ENCODE measurements at regions of chr12 and their contacts with region 1.

Region 1: GRCh38 chr12:124388679-124389536 is 94.0 kb downstream of the RFLNA start:
- DNase-seq: peak; percentile 93
- H3K4me3 ChIP-seq: peak overlapping the region; percentile 61 to 91
- H3K27ac ChIP-seq: peak overlapping the region; percentile 95 to 97
- H3K4me1 ChIP-seq: peaks cover 63 to 64% of the 10 kb centered on the region in 2 experiments
- H3K27me3 ChIP-seq: no peaks in the 10 kb centered on the region
- CTCF ChIP-seq: 0 out of 2 replicates have a peak, but pooled peaks have one; percentile 9
- EP300 ChIP-seq: no peak
- RAD21 ChIP-seq: peak; percentile 9; the same call in 1 of the 2 replicates

Region 2: GRCh38 chr12:124053851-124054250 is 335.1 kb before region 1 on chr12:
- CTCF ChIA-PET with region 1: interaction called, 10 read pairs
- POLR2A ChIA-PET with region 1: no interaction called
- DNase-seq: peak; percentile 44
- H3K4me3 ChIP-seq: no peak overlapping the region; a peak in 1 of 4 replicates
- H3K27ac ChIP-seq: no peak overlapping the region
- H3K4me1 ChIP-seq: peaks cover 0 to 14% of the 10 kb centered on the region in 2 experiments; a peak in 1 of 4 replicates
- H3K27me3 ChIP-seq: no peaks in the 10 kb centered on the region
- CTCF ChIP-seq: peak; percentile 27; the same call in 1 of the 2 replicates
- EP300 ChIP-seq: no peak
- RAD21 ChIP-seq: peak; percentile 70

Region 3: DNA sequence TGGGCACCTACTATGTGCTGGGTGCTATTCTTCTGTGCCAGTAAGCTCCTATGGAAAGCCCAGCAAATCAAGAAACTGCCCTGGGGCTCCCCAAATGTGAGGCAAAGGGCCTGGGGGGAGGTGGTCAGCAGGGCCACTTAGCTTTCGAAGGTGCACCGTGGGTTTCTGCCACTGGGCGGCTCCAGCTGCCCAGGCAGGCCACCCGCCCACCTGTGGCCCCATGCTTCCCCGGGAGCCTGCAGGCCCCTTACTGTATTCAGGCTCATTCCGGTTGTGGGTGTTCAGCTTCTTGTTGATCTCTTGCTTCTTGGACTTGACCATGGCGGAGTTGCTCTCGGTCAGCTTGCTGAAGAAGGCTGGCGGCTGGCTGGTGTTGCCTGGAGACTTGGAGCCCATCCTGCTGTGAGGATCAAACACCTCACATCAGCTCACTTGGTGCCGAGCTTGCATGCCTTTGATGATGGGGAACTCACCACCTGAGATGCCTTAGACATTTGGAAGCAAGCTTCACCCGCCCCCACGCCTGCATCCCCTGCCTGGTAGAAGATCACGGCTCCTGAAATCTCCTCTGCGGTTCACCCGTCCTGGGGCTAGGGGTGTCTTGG is 56.7 kb before region 1 on chr12:
- CTCF ChIA-PET with region 1: no interaction called
- POLR2A ChIA-PET with region 1: no interaction called
- DNase-seq: peak; percentile 73
- H3K4me3 ChIP-seq: no peak overlapping the region
- H3K27ac ChIP-seq: no peak overlapping the region
- H3K4me1 ChIP-seq: no peaks in the 10 kb centered on the region
- H3K27me3 ChIP-seq: no peaks in the 10 kb centered on the region
- CTCF ChIP-seq: peak; percentile 35; the same call in 1 of the 2 replicates
- EP300 ChIP-seq: no peak
- RAD21 ChIP-seq: peak; percentile 31; the same call in 1 of the 2 replicates

Region 4: GRCh38 chr12:124453419-124454351 is 64.8 kb after region 1 on chr12:
- CTCF ChIA-PET with region 1: no interaction called
- POLR2A ChIA-PET with region 1: no interaction called
- DNase-seq: peak; percentile 70
- H3K4me3 ChIP-seq: no peak overlapping the region; a peak in 1 of 4 replicates
- H3K27ac ChIP-seq: peak overlapping the region; percentile 67 to 77; a peak in 3 of 4 replicates
- H3K4me1 ChIP-seq: peaks cover 24 to 26% of the 10 kb centered on the region in 2 experiments; a peak in 3 of 4 replicates
- H3K27me3 ChIP-seq: no peaks in the 10 kb centered on the region
- CTCF ChIP-seq: no peak
- EP300 ChIP-seq: peak in 1 of 2 experiments; percentile 69; a peak in 2 of 4 replicates
- RAD21 ChIP-seq: no peak